Mammary epithelial cell (primary cell): ENCODE measurements at regions of chr20 and their contacts with region 1.

Region 1: DNA sequence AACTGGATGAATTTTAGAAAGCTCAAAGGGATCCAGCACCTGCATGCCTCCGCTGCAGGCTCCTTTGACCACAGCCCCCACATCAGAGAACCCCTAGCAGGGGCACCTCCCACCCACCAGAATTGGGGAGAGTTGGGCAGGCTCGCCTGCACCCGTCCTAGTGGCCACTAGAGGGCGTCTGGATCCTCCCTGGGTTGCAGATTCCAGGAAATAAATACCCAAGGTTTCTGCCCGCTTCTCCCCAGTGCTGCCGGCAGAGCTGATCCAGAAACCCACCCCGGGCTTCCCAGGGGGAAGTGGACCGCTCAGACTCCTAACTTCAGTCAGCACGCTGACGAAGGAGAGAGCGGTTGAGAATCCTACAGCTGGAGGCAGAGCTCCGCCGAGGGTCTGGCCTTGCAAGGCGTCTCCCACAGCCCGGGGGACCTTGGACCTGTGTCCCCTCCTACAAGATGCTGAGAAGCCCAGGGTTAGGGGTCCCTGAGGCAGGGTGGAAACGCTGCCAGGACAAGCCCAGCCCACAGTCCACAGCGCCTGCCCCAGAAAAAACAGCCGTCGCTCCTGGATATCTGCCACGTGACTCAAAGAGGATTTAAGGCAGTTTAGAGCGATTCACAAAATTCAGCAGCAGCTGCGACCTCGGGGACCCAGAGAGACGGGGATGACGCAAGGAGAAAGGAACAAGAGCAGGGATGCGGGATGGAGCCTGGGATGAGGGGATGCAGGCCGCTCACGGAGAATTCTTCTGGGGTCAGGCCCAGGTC is 32.6 kb upstream of the PHACTR3 start:
- DNase-seq: peak; percentile 17
- H3K4me3 ChIP-seq: no peak overlapping the region
- H3K27ac ChIP-seq: no peak overlapping the region
- H3K4me1 ChIP-seq: no peaks in the 10 kb centered on the region
- H3K27me3 ChIP-seq: peaks cover 5% of the 10 kb centered on the region
- CTCF ChIP-seq: peak; percentile 78 to 94

Region 2: DNA sequence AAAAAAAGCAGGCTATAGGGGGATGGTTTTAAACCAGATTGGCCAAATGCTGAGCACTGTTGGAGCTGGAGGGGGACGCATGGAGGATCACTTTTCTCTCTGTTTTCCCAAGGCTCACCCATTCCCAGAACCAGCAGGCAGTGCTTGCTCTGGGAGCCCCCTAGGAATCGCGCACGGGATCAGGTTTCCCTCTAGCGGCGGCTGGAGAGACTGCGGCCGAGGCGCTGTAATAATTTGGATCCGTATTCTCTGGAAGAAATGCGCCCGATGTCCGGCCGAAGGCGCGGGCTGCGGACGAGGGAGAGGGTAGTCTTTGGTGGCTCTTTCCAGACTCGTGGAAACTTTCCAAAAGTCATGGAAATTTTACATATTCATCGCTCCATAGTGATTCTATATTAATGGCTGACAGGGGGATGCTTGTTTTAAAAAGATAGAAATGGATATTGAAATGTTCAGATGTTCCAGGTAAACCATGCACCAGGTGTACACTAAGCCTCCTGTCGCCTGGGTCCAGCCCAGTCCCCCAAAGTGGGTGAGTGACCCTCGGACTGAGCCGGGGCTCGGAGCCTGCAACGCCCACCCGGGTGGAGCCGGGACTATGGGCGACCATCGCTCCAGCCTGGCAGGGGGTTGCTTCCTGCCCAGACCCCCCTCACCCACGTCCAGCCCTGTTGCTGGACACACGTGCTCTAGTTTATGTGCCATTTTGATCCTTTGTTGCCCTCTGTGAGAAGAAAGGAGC is 46.1 kb before region 1 on chr20:
- CTCF ChIA-PET with region 1: no interaction called
- dilution Hi-C with region 1: loop called (anchors 5 kb)
- in situ Hi-C with region 1: no loop called
- intact Hi-C with region 1: no loop called
- DNase-seq: peak; percentile 19
- H3K4me3 ChIP-seq: no peak overlapping the region
- H3K27ac ChIP-seq: no peak overlapping the region
- H3K4me1 ChIP-seq: no peaks in the 10 kb centered on the region
- H3K27me3 ChIP-seq: peaks cover 3% of the 10 kb centered on the region
- CTCF ChIP-seq: peak; percentile 68 to 86

Region 3: GRCh38 chr20:59611269-59611668 is 39.5 kb after region 1 on chr20:
- CTCF ChIA-PET with region 1: no interaction called
- dilution Hi-C with region 1: loop called (anchors 5 kb)
- in situ Hi-C with region 1: no loop called
- intact Hi-C with region 1: no loop called
- DNase-seq: no peak
- H3K4me3 ChIP-seq: no peak overlapping the region
- H3K27ac ChIP-seq: no peak overlapping the region
- H3K4me1 ChIP-seq: no peaks in the 10 kb centered on the region
- H3K27me3 ChIP-seq: peaks cover 11% of the 10 kb centered on the region
- CTCF ChIP-seq: no peak

Region 4: GRCh38 chr20:59664421-59664941 is 92.7 kb after region 1 on chr20:
- CTCF ChIA-PET with region 1: no interaction called
- dilution Hi-C with region 1: loop called (anchors 5 kb)
- in situ Hi-C with region 1: no loop called
- intact Hi-C with region 1: no loop called
- DNase-seq: no peak
- H3K4me3 ChIP-seq: no peak overlapping the region
- H3K27ac ChIP-seq: no peak overlapping the region
- H3K4me1 ChIP-seq: no peaks in the 10 kb centered on the region
- H3K27me3 ChIP-seq: no peaks in the 10 kb centered on the region
- CTCF ChIP-seq: no peak

Region 5: DNA sequence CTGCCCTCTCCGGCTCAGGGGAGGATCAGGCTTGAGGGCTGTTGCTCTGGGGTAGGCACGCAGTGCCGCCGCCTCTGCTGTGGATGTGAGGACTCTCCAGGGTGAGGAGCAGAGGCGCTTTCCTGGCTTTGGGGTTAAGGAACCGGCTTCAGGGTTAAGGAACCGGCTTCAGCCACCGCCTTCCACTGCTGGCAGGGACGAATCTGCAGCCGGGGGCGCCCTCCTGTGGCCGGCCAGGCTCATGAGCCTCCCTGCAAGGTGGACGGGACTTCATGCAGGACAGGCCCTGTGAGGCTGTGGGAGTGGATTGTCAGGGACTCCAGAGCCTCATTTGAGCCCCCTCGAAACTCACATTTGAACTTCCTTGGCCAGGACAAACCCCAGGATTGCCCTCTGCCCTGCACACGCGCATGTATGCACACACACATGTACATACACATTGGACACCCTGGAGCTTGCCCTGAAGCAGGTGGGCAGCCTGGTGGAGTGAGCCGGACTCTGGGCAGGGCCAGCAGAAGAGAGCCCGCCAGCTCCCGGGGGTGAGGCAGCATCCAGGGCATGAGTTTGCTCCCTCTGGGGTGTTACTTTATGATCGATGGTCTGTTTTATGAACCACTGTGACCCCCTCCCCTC is 179.4 kb after region 1 on chr20:
- CTCF ChIA-PET with region 1: no interaction called
- dilution Hi-C with region 1: no loop called
- in situ Hi-C with region 1: no loop called
- intact Hi-C with region 1: loop called (anchors 1 kb)
- DNase-seq: peak; percentile 42
- H3K4me3 ChIP-seq: no peak overlapping the region
- H3K27ac ChIP-seq: no peak overlapping the region
- H3K4me1 ChIP-seq: no peaks in the 10 kb centered on the region
- H3K27me3 ChIP-seq: peaks cover 7% of the 10 kb centered on the region
- CTCF ChIP-seq: peak; percentile 64 to 85